Heart right ventricle (tissue), 16 donors: ENCODE measurements at regions of chr21 and their contacts with region 1.

Region 1: DNA sequence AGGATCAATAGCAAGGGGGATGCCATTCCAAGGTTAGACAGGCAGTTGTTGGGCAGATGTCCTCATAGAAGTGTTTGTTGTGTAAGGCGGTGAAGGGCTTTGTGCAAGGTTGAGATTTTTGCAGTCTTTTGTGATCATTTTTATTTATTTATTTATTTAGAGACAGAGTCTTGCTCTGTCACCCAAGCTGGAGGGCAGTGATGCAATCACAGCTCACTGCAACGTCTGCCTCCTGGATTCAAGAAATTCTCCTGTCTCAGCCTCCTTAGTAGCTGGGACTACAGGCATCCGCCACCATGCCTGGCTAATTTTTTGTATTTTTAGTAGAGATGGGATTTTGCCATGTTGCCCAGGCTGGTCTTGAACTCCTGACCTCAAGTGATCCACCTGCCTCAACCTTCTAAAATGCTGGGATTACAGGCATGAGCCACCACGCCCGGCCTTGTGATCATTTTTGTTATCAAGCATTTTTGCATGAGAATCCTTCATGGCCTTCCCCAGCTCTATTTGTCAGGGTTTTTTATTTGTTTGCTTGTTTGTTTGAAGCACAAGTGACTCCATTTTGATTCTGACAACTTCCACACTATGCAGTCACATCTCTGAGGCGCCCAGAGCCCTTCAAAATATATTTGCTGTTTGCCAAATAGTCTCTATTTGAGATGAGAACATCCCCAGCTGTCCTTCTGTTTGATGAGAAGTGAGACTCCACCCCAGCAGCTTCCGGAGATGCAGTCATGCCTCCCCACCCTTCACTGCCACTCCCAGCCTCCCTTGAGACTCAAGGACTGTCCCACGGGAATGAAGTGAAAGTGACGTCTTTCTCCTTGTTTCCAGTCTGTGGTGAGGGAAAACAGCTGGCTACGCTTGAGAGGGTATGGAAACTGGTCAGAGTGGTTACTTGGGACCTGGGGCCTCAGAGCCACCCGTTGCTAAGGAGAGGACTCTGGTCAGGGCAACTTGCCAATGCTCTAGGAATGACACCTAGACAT is 38.0 kb downstream of the TMEM50B start:
- DNase-seq: peak; percentile 37 to 85
- ATAC-seq: peak; percentile 46 to 83 (median 73)
- H3K4me3 ChIP-seq: no peak overlapping the region
- H3K27ac ChIP-seq: peak overlapping the region in 8 of 10 donors; percentile 8 to 74 (median 57)
- H3K4me1 ChIP-seq: peaks cover 0 to 34% (median 20%) of the 10 kb centered on the region in 9 donors
- H3K27me3 ChIP-seq: no peaks in the 10 kb centered on the region
- CTCF ChIP-seq: no peak

Region 2: DNA sequence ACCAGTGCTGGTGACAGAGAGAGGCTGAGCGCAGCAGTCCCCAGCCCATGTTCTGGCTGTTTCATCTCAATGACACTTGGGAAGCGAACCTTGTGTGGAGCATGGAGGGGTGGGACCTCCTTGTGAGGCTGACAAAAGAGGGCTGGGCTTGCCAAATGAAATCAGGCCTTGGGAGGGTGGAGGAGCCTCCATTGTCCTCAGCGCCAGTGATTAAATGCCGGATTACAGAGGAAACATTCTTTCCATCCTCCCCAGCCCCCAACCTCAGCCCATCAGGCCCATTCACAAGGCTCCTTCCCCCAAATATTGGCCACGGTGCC is 606.9 kb before region 1 on chr21:
- intact Hi-C with region 1: loop called in 5 of 10 experiments (anchors 5 to 10 kb)
- DNase-seq: no peak
- ATAC-seq: no peak
- H3K4me3 ChIP-seq: no peak overlapping the region
- H3K27ac ChIP-seq: no peak overlapping the region
- H3K4me1 ChIP-seq: peaks cover 0 to 5% (median 0%) of the 10 kb centered on the region in 9 donors
- H3K27me3 ChIP-seq: peaks cover 0 to 6% (median 0%) of the 10 kb centered on the region in 7 donors
- CTCF ChIP-seq: no peak

Region 3: GRCh38 chr21:32940079-32941014 is 501.4 kb before region 1 on chr21:
- intact Hi-C with region 1: loop called in 2 of 10 experiments (anchors 10 kb)
- DNase-seq: peak in 1 of 2 donors; percentile 40
- ATAC-seq: peak in 4 of 8 donors; percentile 51 to 62 (median 56)
- H3K4me3 ChIP-seq: no peak overlapping the region
- H3K27ac ChIP-seq: no peak overlapping the region
- H3K4me1 ChIP-seq: peaks cover 0 to 5% (median 0%) of the 10 kb centered on the region in 9 donors
- H3K27me3 ChIP-seq: peaks cover 0 to 5% (median 0%) of the 10 kb centered on the region in 7 donors
- CTCF ChIP-seq: peak; percentile 52 to 85 (median 79)

Region 4: DNA sequence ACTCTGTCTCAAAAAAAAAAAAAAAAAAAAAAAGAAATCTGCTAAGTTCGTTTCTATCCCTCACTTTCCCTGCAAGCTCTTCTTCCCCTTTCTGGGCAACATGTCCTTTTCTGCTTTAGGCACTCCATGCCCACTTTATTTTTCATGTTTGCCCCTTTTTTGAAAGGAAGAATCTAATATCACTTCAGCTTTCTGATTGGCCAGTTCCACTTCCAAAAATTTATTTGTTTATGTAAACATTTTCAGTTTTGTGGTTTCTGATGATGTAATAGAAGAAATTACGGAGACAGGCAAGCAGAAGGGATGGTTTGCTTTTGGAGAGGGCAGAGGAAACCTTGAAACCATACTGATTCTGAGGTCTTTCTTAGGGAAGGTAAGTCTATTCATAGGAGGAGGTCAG is 101.9 kb before region 1 on chr21:
- intact Hi-C with region 1: no loop called
- DNase-seq: no peak
- ATAC-seq: no peak
- H3K4me3 ChIP-seq: no peak overlapping the region
- H3K27ac ChIP-seq: peak overlapping the region in 1 of 10 donors; percentile 33
- H3K4me1 ChIP-seq: peaks cover 0 to 27% (median 13%) of the 10 kb centered on the region in 9 donors
- H3K27me3 ChIP-seq: no peaks in the 10 kb centered on the region
- CTCF ChIP-seq: no peak

Region 5: DNA sequence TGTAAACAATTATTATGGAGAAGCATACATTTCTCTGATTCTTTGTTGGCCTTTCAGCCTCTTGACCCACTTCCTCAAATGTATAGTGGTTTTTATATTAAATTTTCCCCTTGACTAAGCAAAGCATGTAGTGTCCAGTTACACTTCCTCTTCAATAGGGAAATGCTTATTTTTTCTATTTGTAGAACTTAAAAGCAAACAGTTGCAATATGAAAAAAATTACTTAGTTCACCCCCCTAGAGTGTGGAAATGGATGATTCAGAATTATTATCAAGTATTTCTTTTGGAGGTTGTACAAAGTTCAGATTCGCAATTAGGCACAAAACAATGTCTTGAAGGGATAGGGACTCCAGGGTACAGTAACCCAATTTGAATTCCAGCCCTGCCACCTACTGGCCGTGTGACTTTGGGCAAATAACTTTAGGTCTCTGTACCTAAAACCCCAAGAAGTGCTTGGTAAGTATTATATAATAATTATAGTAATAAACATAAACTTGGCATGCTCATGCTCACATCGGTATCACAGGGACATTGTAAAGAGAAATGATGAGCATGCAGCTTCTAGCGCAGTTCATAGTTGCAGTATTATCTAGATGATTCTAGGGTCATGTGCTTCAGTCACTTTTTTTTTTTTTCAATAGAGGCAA is 67.2 kb before region 1 on chr21:
- intact Hi-C with region 1: loop called in 3 of 10 experiments (anchors 10 kb)
- DNase-seq: peak; percentile 32 to 66
- ATAC-seq: peak; percentile 65 to 81 (median 78)
- H3K4me3 ChIP-seq: no peak overlapping the region
- H3K27ac ChIP-seq: peak overlapping the region in 3 of 10 donors; percentile 36 to 90 (median 60)
- H3K4me1 ChIP-seq: peaks cover 0 to 46% (median 10%) of the 10 kb centered on the region in 9 donors
- H3K27me3 ChIP-seq: no peaks in the 10 kb centered on the region
- CTCF ChIP-seq: peak; percentile 54 to 85 (median 71)

Region 6: GRCh38 chr21:33403779-33404585 is 37.8 kb before region 1 on chr21:
- intact Hi-C with region 1: loop called in 2 of 10 experiments (anchors 5 kb)
- DNase-seq: peak; percentile 60 to 72
- ATAC-seq: peak; percentile 44 to 76 (median 60)
- H3K4me3 ChIP-seq: peak overlapping the region; percentile 66 to 98 (median 93)
- H3K27ac ChIP-seq: peak overlapping the region; percentile 83 to 99 (median 96)
- H3K4me1 ChIP-seq: peaks cover 4 to 85% (median 37%) of the 10 kb centered on the region in 9 donors
- H3K27me3 ChIP-seq: no peaks in the 10 kb centered on the region
- CTCF ChIP-seq: no peak

Region 7: DNA sequence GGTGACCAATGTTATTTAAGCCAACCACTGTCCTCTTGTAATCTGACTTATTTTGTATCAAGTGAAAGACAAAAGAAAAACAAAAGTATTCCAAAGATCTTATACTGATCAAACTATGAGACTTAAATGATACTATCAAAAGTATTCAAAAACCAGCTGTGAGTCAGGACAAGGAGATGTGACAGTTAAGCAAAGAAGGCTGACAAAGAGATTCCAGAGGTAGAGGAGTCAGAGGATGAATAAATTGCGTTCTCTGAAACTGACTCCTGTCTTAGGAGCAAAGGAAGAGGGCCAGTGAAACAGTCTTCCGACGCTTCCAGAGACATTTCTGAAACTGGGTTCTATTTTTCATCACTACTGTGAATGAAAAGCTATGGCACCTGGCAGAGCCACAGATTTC is 17.1 kb after region 1 on chr21:
- intact Hi-C with region 1: no loop called
- DNase-seq: no peak
- ATAC-seq: no peak
- H3K4me3 ChIP-seq: no peak overlapping the region
- H3K27ac ChIP-seq: no peak overlapping the region
- H3K4me1 ChIP-seq: peaks cover 0 to 4% (median 0%) of the 10 kb centered on the region in 9 donors
- H3K27me3 ChIP-seq: no peaks in the 10 kb centered on the region
- CTCF ChIP-seq: no peak